ENCODE measurements at regions of chr16 and their contacts with region 1.

Region 1: GRCh38 chr16:17369421-17370222 is 101.1 kb downstream of the XYLT1 start:
- DNase-seq: peak; percentile 45 to 88 (median 84)
- ATAC-seq: peak; percentile 91
- H3K4me3 ChIP-seq: peak overlapping the region; percentile 65
- H3K4me3 Mint-ChIP-seq: peak overlapping the region; percentile 77 to 96 (median 92)
- H3K27ac ChIP-seq: peak overlapping the region; percentile 70
- H3K27ac Mint-ChIP-seq: peak overlapping the region; percentile 96 to 100 (median 99)
- H3K4me1 ChIP-seq: peaks cover 78 to 81% of the 10 kb centered on the region in 2 donors
- H3K4me1 Mint-ChIP-seq: peaks cover 64 to 99% (median 92%) of the 10 kb centered on the region in 7 donors
- H3K27me3 ChIP-seq: no peaks in the 10 kb centered on the region
- H3K27me3 Mint-ChIP-seq: no peaks in the 10 kb centered on the region

Region 2: DNA sequence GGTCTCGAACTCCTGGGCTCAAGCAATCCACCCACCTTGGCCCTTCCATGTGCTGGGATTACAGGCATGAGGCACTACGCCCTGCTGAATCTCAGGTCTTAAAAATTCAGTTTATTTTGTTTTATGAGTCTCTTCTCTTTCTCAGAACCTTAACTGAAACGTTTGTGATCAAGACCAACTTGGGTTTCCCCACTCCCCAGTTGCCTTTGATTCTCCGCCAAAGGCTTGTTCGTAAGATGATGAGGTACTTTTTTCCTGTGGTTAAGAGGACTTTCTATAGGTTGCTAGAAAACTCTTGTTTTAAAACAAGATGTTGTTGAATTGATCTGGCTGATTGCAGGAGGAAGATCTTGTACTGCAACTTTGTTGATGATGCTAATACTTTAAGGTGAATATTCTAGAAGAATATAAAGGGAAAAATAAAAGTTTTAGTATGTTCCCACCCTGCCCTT is 1408.5 kb before region 1 on chr16:
- CTCF ChIA-PET with region 1: no interaction called
- POLR2A ChIA-PET with region 1: no interaction called
- intact Hi-C with region 1: loop called in 1 of 2 experiments (anchors 10 kb)
- DNase-seq: peak; percentile 17 to 94 (median 91)
- ATAC-seq: peak; percentile 91
- H3K4me3 ChIP-seq: peak overlapping the region; percentile 55
- H3K4me3 Mint-ChIP-seq: peak overlapping the region; percentile 54 to 92 (median 88)
- H3K27ac ChIP-seq: peak overlapping the region; percentile 91
- H3K27ac Mint-ChIP-seq: peak overlapping the region; percentile 96 to 99 (median 98)
- H3K4me1 ChIP-seq: peaks cover 32 to 34% of the 10 kb centered on the region in 2 donors
- H3K4me1 Mint-ChIP-seq: peaks cover 31 to 86% (median 72%) of the 10 kb centered on the region in 7 donors
- H3K27me3 ChIP-seq: no peaks in the 10 kb centered on the region
- H3K27me3 Mint-ChIP-seq: no peaks in the 10 kb centered on the region

Region 3: GRCh38 chr16:17211797-17212196 is 157.8 kb before region 1 on chr16:
- CTCF ChIA-PET with region 1: interaction called, 3 read pairs
- POLR2A ChIA-PET with region 1: no interaction called
- intact Hi-C with region 1: loop called in 1 of 2 experiments (anchors 5 kb)
- DNase-seq: peak in 8 of 9 donors; percentile 4 to 50 (median 34)
- ATAC-seq: peak; percentile 77
- H3K4me3 ChIP-seq: no peak overlapping the region
- H3K4me3 Mint-ChIP-seq: no peak overlapping the region
- H3K27ac ChIP-seq: no peak overlapping the region
- H3K27ac Mint-ChIP-seq: peak overlapping the region in 2 of 9 donors; percentile 21 to 91
- H3K4me1 ChIP-seq: peaks cover 0 to 7% of the 10 kb centered on the region in 2 donors
- H3K4me1 Mint-ChIP-seq: peaks cover 10 to 41% (median 30%) of the 10 kb centered on the region in 7 donors
- H3K27me3 ChIP-seq: no peaks in the 10 kb centered on the region
- H3K27me3 Mint-ChIP-seq: no peaks in the 10 kb centered on the region

Region 4: GRCh38 chr16:17351441-17352035 is 18.1 kb before region 1 on chr16:
- CTCF ChIA-PET with region 1: interaction called, 7 read pairs
- POLR2A ChIA-PET with region 1: interaction called, 57 read pairs
- intact Hi-C with region 1: loop called (anchors 1 to 2 kb)
- DNase-seq: peak in 1 of 9 donors; percentile 14
- ATAC-seq: no peak
- H3K4me3 ChIP-seq: no peak overlapping the region
- H3K4me3 Mint-ChIP-seq: peak overlapping the region in 4 of 10 donors; percentile 20 to 27 (median 24)
- H3K27ac ChIP-seq: no peak overlapping the region
- H3K27ac Mint-ChIP-seq: peak overlapping the region in 6 of 9 donors; percentile 47 to 90 (median 60)
- H3K4me1 ChIP-seq: peaks cover 10 to 35% of the 10 kb centered on the region in 2 donors
- H3K4me1 Mint-ChIP-seq: peaks cover 46 to 82% (median 78%) of the 10 kb centered on the region in 7 donors
- H3K27me3 ChIP-seq: no peaks in the 10 kb centered on the region
- H3K27me3 Mint-ChIP-seq: no peaks in the 10 kb centered on the region

Region 5: DNA sequence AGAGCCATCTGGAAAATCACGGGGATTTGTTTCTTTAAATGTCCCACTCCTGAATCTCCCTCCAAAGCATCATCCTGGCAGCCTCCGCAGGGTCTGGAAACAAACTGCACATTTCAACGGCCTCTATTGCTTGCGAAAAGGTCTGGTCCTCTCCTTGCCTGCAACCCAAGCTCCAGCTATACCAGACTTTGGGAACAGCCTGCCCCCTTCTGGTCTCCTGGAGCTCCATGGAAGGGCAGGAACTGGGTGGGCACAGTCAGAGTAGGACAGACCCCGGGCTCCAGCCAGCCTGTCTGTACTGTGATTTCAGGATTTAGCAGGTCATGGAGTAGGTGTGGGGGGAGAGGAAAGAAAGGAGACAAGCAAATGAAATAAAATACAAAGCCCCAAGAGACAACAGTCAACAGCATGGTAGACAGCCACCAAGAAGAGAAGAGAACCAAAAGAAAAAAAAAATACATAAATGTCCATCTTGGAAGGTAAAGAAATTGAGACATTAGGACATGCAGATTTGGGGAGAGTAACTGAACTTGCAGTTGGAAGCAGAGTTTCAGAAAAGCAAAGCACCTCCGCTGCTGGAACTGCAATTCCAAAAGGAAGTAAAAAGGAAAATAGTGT is 98.4 kb after region 1 on chr16:
- CTCF ChIA-PET with region 1: interaction called, 8 read pairs
- POLR2A ChIA-PET with region 1: interaction called, 4 read pairs
- intact Hi-C with region 1: loop called (anchors 1 to 2 kb)
- DNase-seq: peak in 5 of 9 donors; percentile 13 to 39 (median 24)
- ATAC-seq: peak; percentile 39
- H3K4me3 ChIP-seq: peak overlapping the region; percentile 9
- H3K4me3 Mint-ChIP-seq: peak overlapping the region; percentile 84 to 98 (median 95)
- H3K27ac ChIP-seq: no peak overlapping the region
- H3K27ac Mint-ChIP-seq: peak overlapping the region in 5 of 9 donors; percentile 6 to 90 (median 20)
- H3K4me1 ChIP-seq: peaks cover 20 to 26% of the 10 kb centered on the region in 2 donors
- H3K4me1 Mint-ChIP-seq: peaks cover 47 to 64% (median 57%) of the 10 kb centered on the region in 7 donors
- H3K27me3 ChIP-seq: no peaks in the 10 kb centered on the region
- H3K27me3 Mint-ChIP-seq: no peaks in the 10 kb centered on the region

Region 6: DNA sequence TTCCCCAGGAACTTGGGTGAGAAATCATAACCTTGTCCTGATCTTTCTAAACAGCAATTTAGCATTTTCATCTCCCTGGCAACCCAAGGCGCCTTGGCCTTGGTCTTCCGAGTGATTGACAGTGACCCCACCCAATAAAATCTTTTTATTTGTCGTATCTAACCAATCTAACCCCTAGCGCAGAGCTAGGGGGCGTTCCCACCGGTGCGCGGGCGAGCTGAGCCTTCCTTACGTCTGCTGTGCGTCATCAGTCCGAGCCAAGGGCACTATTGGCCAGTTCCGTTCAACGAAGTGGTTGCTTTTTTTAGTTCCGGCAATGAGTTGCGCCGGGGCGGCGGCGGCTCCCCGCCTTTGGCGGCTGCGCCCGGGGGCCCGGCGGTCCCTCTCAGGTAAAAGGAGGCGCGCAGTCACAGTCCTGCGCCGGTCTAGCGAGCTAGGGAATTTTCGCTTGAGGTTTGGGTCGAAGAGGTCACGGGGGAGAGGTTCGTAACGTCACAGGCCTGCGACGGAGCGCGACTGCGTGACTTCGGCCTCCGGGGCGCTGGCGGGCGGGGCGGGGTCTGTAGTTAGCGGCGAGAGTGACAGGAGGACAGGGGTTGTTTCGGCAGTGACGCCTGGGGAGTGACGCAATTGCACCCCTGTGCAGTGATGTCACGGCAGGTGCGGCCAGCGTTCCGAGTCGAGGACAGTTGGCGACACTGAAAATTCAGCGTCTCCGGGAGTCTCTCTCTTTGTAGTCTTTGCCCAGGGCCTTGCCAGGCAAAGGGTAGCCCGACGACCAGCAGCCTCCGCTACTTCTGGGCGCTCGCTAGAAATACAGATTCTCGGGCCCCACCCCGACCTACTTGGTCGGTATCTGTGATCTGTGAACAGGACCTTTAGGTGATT is 1698.0 kb after region 1 on chr16 and contains the start of gene COQ7:
- CTCF ChIA-PET with region 1: no interaction called
- POLR2A ChIA-PET with region 1: no interaction called
- intact Hi-C with region 1: loop called in 1 of 2 experiments (anchors 5 kb)
- DNase-seq: peak; percentile 95 to 100 (median 99)
- ATAC-seq: peak; percentile 92
- H3K4me3 ChIP-seq: peak within 1 kb of the TSS; percentile 73
- H3K4me3 Mint-ChIP-seq: peak within 1 kb of the TSS; percentile 86 to 97 (median 95)
- H3K27ac ChIP-seq: peak within 1 kb of the TSS; percentile 100
- H3K27ac Mint-ChIP-seq: peak within 1 kb of the TSS; percentile 88 to 100 (median 98)
- H3K4me1 ChIP-seq: peaks cover 5 to 10% of the 10 kb centered on the region in 2 donors
- H3K4me1 Mint-ChIP-seq: peaks cover 0 to 24% (median 15%) of the 10 kb centered on the region in 7 donors
- H3K27me3 ChIP-seq: no peaks in the 10 kb centered on the region
- H3K27me3 Mint-ChIP-seq: peaks cover 0 to 5% (median 0%) of the 10 kb centered on the region in 5 donors
- total RNA-seq, gene COQ7: 16.7 to 20.4 (median 17.5) TPM